Spleen (tissue), 13 donors: ENCODE measurements at regions of chr4 and their contacts with region 1.

Region 1: DNA sequence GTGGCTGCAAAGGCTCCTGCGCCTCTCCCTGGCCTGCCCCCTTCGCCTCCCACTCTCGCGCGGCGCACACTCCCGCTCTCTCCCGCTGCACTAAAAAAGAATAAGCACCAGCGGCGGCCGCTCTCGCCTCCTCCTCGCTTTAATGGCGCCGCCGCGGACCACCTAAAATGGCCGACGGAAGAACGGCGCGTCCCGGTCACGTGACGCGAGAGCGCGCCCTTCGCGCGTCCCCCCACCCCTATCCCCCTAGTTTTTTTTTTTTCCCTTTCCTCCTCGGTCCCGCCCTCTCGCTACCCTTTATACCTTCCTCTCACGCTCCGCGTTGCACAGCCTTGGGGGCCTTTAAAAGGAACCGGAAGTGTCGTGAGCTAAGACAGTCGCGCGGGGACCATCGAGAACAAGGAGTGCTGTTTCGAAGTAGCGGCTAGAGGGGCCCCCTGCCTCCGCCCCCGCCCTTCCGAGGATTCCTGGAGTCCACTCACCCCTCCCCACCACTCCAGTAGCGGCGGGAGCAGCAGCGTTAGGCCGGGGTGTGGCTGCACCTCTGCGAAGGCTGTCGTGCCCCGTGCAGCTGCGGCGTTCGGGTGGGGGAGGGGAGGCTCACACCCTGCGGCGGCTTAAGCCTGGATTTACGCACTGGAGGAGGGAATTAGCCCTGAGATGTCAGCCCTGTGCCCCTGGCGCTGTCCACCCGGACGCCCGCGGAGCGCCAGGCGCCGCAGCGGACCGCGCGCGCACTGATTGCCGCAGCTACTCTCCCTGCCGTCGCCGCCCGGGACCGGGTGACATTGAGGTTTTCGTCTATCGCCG is at the start of gene HNRNPD:
- DNase-seq: peak; percentile 98
- H3K4me3 ChIP-seq: peak within 1 kb of the TSS; percentile 79 to 97 (median 88)
- H3K27ac ChIP-seq: peak within 1 kb of the TSS; percentile 97 to 100 (median 100)
- H3K4me1 ChIP-seq: peaks cover 30 to 70% (median 48%) of the 10 kb centered on the region in 6 donors
- H3K27me3 ChIP-seq: no peaks in the 10 kb centered on the region
- CTCF ChIP-seq: peak in 3 of 11 experiments; percentile 4 to 26 (median 5)
- POLR2A ChIP-seq: peak; percentile 24 to 92 (median 63)
- total RNA-seq, gene HNRNPD: 135 to 208 (median 192) TPM

Region 2: GRCh38 chr4:82428969-82429727 is 55.1 kb after region 1 on chr4:
- intact Hi-C with region 1: loop called (anchors 5 kb)
- DNase-seq: peak; percentile 97
- H3K4me3 ChIP-seq: peak overlapping the region; percentile 83 to 98 (median 95)
- H3K27ac ChIP-seq: peak overlapping the region; percentile 97 to 100 (median 100)
- H3K4me1 ChIP-seq: peaks cover 41 to 77% (median 60%) of the 10 kb centered on the region in 6 donors
- H3K27me3 ChIP-seq: no peaks in the 10 kb centered on the region
- CTCF ChIP-seq: peak; percentile 88 to 100 (median 99)
- POLR2A ChIP-seq: peak in 2 of 3 donors; percentile 21 to 51